Sigmoid colon (tissue), 7 donors: ENCODE measurements at regions of chr15 and their contacts with region 1.

Region 1: GRCh38 chr15:78811124-78811824 is at the start of gene ADAMTS7:
- DNase-seq: peak; percentile 88
- H3K4me3 ChIP-seq: peak within 1 kb of the TSS; percentile 52 to 74 (median 70)
- H3K27ac ChIP-seq: peak within 1 kb of the TSS; percentile 74 to 85 (median 81)
- H3K4me1 ChIP-seq: peaks cover 0 to 21% (median 14%) of the 10 kb centered on the region in 4 donors
- H3K27me3 ChIP-seq: no peaks in the 10 kb centered on the region
- CTCF ChIP-seq: peak; percentile 59 to 85 (median 80)
- EP300 ChIP-seq: no peak
- POLR2A ChIP-seq: peak in 1 of 2 donors; percentile 4
- total RNA-seq, gene ADAMTS7: 1.6 to 8.3 (median 2.2) TPM

Region 2: GRCh38 chr15:77709135-77709886 is 1102.0 kb before region 1 on chr15:
- intact Hi-C with region 1: no loop called
- DNase-seq: no peak
- H3K4me3 ChIP-seq: no peak overlapping the region
- H3K27ac ChIP-seq: no peak overlapping the region
- H3K4me1 ChIP-seq: no peaks in the 10 kb centered on the region
- H3K27me3 ChIP-seq: peaks cover 0 to 2% (median 0%) of the 10 kb centered on the region in 3 donors
- CTCF ChIP-seq: no peak
- EP300 ChIP-seq: no peak
- POLR2A ChIP-seq: no peak

Region 3: DNA sequence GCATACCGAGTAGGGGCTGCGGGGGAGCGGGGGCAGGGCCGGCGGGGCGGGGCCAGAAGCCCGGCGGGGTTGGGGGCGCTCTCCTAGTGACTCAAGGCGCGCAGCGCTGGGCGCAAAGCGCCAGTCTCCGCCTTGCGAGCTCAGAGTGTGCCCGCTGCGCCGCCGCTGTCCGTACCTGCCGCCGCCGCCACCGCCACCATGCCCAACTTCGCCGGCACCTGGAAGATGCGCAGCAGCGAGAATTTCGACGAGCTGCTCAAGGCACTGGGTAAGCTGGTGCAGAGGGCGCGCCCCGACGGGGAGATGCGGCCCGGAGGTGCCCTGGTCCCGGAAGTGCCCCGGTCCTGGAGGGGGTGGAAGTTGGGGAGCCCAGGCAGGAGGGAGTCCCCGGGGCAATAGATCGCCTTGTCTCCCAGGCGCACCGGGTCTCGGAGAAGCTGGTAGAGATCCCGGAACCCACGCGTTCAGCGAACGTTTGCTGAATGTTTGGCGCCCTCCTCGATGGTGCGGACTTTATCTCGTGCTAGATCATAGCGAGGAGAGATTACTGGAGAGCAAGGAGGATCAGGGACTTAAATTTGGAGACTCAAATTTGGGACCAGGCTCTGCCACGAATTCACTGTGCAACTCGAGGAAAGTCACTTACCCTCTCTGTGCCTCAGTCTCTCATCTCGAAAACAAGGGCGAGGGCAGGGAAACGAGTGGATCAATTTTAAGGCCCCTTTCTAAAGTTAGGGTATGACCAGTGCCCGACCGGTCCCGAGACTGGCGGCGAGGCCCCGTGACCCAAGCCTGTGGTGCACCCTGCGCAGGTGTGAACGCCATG is 470.8 kb before region 1 on chr15 and contains the start of gene CRABP1:
- intact Hi-C with region 1: no loop called
- DNase-seq: no peak
- H3K4me3 ChIP-seq: peak within 1 kb of the TSS in 1 of 4 donors; percentile 15
- H3K27ac ChIP-seq: no peak within 1 kb of the TSS
- H3K4me1 ChIP-seq: peaks cover 0 to 16% (median 12%) of the 10 kb centered on the region in 4 donors
- H3K27me3 ChIP-seq: peaks cover 7 to 52% (median 30%) of the 10 kb centered on the region in 3 donors
- CTCF ChIP-seq: no peak
- EP300 ChIP-seq: no peak
- POLR2A ChIP-seq: no peak
- total RNA-seq, gene CRABP1: 2.1 to 8.2 (median 5.3) TPM

Region 4: DNA sequence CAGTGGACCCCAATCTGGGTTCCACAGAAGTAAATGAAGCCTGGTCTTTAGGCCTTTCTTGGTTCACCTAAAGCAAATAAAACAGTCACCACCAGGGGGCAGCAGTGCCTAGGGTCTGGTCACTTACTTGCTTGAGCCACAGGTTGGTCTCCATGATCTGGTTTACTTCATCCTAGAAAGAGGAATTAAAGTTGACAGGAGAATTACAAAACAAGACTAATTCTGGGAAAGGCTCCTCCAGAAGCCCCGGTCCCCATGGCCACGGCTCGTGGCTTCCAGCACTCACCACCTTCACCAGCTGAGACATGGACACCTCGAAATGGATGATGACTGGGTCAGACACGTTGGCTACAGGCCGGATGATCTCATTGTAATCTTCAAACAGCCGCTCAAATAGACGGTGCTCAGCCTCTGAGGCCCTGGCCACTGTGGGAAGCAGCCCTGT is 192.8 kb before region 1 on chr15:
- intact Hi-C with region 1: loop called (anchors 5 kb)
- DNase-seq: peak; percentile 96
- H3K4me3 ChIP-seq: no peak overlapping the region
- H3K27ac ChIP-seq: peak overlapping the region in 3 of 4 donors; percentile 37 to 81 (median 65)
- H3K4me1 ChIP-seq: peaks cover 0 to 33% (median 27%) of the 10 kb centered on the region in 4 donors
- H3K27me3 ChIP-seq: peaks cover 0 to 32% (median 12%) of the 10 kb centered on the region in 3 donors
- CTCF ChIP-seq: peak; percentile 77 to 88 (median 82)
- EP300 ChIP-seq: peak in 2 of 4 donors; percentile 63 to 74
- POLR2A ChIP-seq: no peak

Region 5: DNA sequence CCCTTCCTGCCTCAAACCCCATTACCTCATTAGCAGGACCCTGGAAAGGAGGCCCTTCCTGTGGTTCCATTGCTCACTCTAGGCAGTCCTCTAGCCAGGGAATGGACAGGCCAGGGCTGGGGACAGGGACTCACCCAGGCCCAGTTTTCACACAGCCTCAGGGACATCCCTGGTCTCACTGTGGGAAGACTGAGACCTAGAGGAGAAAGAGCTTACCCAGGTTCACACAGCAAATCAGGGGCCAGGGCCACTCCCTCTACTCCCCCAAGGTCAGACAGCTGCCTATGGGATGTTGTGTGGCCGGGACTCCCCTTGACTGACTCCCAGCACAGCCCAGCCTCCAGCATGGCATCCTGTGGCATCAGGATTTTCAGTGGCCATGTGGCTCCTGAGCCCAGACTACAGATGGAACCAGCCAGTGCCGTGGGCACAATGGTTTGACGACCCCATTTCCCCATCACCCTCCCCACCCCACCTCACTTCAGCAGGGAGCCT is 49.3 kb before region 1 on chr15:
- intact Hi-C with region 1: loop called (anchors 5 kb)
- DNase-seq: peak; percentile 56
- H3K4me3 ChIP-seq: no peak overlapping the region
- H3K27ac ChIP-seq: peak overlapping the region in 1 of 4 donors; percentile 10
- H3K4me1 ChIP-seq: peaks cover 0 to 25% (median 19%) of the 10 kb centered on the region in 4 donors
- H3K27me3 ChIP-seq: no peaks in the 10 kb centered on the region
- CTCF ChIP-seq: no peak
- EP300 ChIP-seq: no peak
- POLR2A ChIP-seq: no peak

Region 6: GRCh38 chr15:78859971-78860732 is 48.9 kb after region 1 on chr15:
- intact Hi-C with region 1: loop called (anchors 5 kb)
- DNase-seq: peak; percentile 86
- H3K4me3 ChIP-seq: peak overlapping the region; percentile 30 to 53 (median 47)
- H3K27ac ChIP-seq: peak overlapping the region; percentile 68 to 85 (median 79)
- H3K4me1 ChIP-seq: no peaks in the 10 kb centered on the region
- H3K27me3 ChIP-seq: no peaks in the 10 kb centered on the region
- CTCF ChIP-seq: peak; percentile 11 to 61 (median 42)
- EP300 ChIP-seq: no peak
- POLR2A ChIP-seq: no peak

Region 7: DNA sequence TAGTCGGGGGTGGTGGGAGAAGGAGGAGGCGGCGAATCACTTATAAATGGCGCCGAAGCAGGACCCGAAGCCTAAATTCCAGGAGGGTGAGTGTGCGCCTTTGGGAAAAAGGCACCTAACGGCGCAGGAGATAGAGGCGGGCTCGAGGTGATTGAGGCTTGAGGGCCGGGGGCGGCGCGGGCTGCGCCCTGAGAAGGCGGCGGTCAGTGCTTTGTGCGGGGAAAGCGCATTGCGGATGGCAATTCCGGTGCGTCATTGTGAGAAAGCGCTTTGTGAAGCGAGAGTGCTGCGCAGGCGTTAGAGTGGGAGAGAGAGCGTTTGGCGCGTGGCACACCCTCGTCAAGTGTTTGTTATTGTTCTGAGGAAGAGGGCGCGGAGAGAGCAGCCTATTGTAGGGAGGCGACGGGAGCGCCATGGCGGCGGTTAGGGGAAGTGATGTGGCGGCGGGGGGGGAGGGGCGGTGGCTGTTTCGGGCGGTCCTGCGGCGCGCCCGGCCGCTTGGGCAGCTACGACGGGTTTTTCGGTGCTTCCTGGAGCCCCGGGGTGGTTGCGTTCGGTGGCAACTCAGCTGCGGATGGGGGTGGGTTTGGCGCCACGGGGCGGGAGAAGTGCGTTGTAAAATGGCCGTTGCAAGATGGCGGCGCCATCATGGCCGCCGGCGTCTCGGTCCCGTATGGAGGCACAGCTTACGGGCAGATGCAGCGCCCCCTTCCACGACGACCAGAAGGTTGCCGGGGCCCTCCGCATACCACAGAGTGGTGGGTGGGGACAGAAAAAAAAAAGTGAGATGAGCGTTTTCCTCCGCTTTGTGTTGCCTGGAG is 61.9 kb after region 1 on chr15:
- intact Hi-C with region 1: loop called (anchors 2 kb)
- DNase-seq: peak; percentile 87
- H3K4me3 ChIP-seq: peak overlapping the region; percentile 74 to 99 (median 96)
- H3K27ac ChIP-seq: peak overlapping the region; percentile 95 to 100 (median 100)
- H3K4me1 ChIP-seq: peaks cover 0 to 45% (median 37%) of the 10 kb centered on the region in 4 donors
- H3K27me3 ChIP-seq: no peaks in the 10 kb centered on the region
- CTCF ChIP-seq: peak in 2 of 4 experiments; percentile 5 to 12
- EP300 ChIP-seq: peak in 1 of 4 donors; percentile 2
- POLR2A ChIP-seq: peak; percentile 90 to 94

Region 8: GRCh38 chr15:78930556-78931401 is 119.5 kb after region 1 on chr15:
- intact Hi-C with region 1: no loop called
- DNase-seq: peak; percentile 86
- H3K4me3 ChIP-seq: no peak overlapping the region
- H3K27ac ChIP-seq: peak overlapping the region in 3 of 4 donors; percentile 67 to 79 (median 77)
- H3K4me1 ChIP-seq: peaks cover 0 to 33% (median 29%) of the 10 kb centered on the region in 4 donors
- H3K27me3 ChIP-seq: no peaks in the 10 kb centered on the region
- CTCF ChIP-seq: no peak
- EP300 ChIP-seq: peak in 1 of 4 donors; percentile 52
- POLR2A ChIP-seq: no peak